Left ventricle myocardium inferior (tissue), 1 donor: ENCODE measurements at regions of chr17 and their contacts with region 1.

Region 1: DNA sequence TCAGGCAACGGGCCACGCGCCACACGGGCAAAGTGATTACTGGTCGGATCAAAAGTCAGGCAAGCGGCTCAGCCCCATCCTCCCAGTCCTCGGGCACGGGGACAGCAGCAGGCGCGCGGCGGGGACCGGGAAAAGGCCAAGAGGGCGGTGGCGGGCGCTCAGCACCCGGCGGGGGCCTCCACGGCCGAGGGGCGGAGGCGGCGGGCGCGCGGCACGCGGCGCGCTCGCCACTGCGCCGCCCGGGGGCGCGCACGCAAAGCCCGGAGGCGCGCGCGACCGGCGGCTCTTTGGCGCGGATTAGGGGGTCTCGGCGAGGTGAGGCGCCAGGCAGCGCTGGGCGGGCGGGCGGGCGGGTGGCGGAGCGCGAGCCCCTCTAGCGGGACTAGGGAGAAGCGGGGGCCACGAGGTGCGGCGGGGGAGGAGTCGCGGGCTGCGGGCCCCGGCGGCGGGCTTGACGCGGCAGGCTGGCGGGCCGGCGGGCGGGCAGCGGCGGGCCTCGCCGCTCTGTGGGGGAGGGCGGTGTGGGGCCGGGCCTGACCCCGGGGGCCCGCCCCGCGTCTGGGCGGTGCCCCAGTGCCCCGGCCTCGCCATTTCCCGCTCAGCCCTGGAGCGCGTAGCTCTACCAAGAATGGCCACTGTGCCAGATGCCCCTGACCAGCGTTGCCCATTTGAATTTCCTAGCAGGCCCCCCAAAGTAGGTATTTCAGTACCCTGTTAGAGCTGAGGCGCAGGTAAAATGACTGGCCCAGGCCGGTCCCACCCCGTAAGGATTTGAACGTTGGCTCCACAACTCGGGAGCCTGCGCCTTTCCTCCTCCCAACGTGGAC is at the starts of genes ACACA and TADA2A:
- DNase-seq: peak; percentile 82
- H3K4me3 ChIP-seq: peak within 1 kb of the TSS; percentile 80
- H3K27ac ChIP-seq: peak within 1 kb of the TSS; percentile 97
- H3K4me1 ChIP-seq: peaks cover 31% of the 10 kb centered on the region
- H3K27me3 ChIP-seq: no peaks in the 10 kb centered on the region
- CTCF ChIP-seq: peak; percentile 32
- total RNA-seq, gene ACACA: 16.2 TPM
- total RNA-seq, gene TADA2A: 11.9 TPM

Region 2: GRCh38 chr17:37489197-37490001 is 82.6 kb after region 1 on chr17 and contains the start of gene DUSP14:
- intact Hi-C with region 1: loop called (anchors 5 kb)
- DNase-seq: peak; percentile 82
- H3K4me3 ChIP-seq: peak within 1 kb of the TSS; percentile 94
- H3K27ac ChIP-seq: peak within 1 kb of the TSS; percentile 94
- H3K4me1 ChIP-seq: peaks cover 64% of the 10 kb centered on the region
- H3K27me3 ChIP-seq: no peaks in the 10 kb centered on the region
- CTCF ChIP-seq: no peak
- total RNA-seq, gene DUSP14: 18.1 TPM